ENCODE measurements at regions of chr22 and their contacts with region 1.

Region 1: DNA sequence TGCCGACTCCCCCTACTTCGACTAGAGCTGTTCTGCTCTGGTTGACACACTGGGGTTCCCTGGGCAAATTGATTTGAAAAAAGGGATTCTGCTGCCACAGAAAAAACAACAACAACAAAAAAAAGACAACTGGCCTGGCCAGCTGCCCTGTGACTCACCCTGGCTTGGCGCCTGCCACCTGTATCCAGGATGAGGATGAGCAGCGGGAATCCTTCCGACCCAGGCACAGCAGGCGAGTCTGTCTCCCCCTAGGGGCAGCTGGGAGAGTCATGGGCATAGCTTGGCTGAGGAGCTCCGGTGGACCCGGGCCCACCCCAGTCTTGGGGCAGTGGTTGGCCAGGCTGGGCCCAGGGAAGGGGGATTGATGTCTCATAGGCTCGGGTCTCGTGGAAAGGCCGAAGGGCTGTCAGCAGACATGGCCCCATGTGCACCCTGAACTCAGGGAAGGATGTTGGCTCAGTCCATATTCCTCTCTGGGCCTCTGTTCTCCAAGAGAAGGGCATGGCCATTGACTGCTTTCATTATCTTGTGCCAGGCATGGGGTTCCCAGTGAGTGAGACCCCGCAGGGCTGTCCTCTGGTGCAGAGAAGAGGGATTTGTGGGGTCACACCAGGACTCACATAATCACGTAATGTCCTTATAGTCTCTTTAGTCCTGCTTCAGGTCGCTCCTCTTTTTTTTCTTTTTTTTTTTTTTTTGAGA is 10.4 kb upstream of the SUN2 start:
- DNase-seq: no peak
- H3K4me3 ChIP-seq: no peak overlapping the region
- H3K27ac ChIP-seq: no peak overlapping the region
- H3K27me3 ChIP-seq: no peaks in the 10 kb centered on the region
- CTCF ChIP-seq: peak; percentile 92

Region 2: DNA sequence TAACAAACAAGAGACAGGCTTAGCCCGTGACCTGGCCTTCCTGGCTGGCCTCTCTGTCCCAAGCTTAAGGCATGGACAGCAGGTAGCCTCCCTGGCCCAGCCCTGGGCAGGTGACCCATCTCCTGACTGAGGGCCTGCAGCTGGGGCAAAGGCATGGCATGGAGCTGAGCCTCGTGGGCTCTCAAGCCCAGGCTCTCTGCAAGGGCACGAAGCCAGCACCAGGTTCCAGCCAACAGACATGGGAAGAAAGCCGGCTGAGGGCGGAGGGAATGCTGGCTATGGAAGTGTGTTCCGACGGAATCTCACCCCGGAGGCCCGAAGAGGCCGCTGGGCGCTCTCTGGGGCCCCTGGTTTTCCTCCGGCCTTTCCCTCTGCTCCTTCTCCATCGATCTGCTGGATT is 14.8 kb after region 1 on chr22:
- CTCF ChIA-PET with region 1: interaction called, 15 read pairs
- POLR2A ChIA-PET with region 1: no interaction called
- DNase-seq: no peak
- H3K4me3 ChIP-seq: no peak overlapping the region
- H3K27ac ChIP-seq: no peak overlapping the region
- H3K27me3 ChIP-seq: no peaks in the 10 kb centered on the region
- CTCF ChIP-seq: no peak

Region 3: DNA sequence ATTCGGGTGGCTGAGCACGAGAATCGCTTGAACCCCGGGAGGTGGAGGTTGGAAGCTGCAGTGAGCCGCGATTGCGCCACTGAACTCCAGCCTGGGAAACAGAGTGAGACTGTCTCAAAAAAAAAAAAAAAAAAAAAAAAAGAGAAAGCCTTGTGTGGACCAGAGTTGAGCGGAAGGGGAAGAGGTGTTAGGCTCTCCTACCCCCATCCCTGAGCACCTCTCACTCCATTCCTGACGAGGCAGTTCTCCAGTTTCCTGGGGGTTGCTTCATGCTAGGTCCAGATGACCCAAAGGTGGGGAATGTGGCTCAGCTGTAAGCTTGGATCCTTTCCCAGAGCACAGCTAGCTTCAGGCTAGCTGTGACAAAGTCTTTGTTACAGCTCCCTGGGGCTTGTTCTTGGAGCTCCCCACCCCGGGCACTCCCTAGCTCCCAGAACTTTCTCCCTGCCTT is 36.5 kb after region 1 on chr22:
- CTCF ChIA-PET with region 1: interaction called, 20 read pairs
- POLR2A ChIA-PET with region 1: no interaction called
- DNase-seq: peak; percentile 85
- H3K4me3 ChIP-seq: no peak overlapping the region
- H3K27ac ChIP-seq: no peak overlapping the region
- H3K27me3 ChIP-seq: peaks cover 2% of the 10 kb centered on the region
- CTCF ChIP-seq: no peak

Region 4: GRCh38 chr22:38850941-38851849 is 85.0 kb after region 1 on chr22:
- CTCF ChIA-PET with region 1: interaction called, 11 read pairs
- POLR2A ChIA-PET with region 1: no interaction called
- DNase-seq: peak; percentile 20
- H3K4me3 ChIP-seq: no peak overlapping the region
- H3K27ac ChIP-seq: peak overlapping the region; percentile 11
- H3K27me3 ChIP-seq: peaks cover 15% of the 10 kb centered on the region
- CTCF ChIP-seq: no peak

Region 5: DNA sequence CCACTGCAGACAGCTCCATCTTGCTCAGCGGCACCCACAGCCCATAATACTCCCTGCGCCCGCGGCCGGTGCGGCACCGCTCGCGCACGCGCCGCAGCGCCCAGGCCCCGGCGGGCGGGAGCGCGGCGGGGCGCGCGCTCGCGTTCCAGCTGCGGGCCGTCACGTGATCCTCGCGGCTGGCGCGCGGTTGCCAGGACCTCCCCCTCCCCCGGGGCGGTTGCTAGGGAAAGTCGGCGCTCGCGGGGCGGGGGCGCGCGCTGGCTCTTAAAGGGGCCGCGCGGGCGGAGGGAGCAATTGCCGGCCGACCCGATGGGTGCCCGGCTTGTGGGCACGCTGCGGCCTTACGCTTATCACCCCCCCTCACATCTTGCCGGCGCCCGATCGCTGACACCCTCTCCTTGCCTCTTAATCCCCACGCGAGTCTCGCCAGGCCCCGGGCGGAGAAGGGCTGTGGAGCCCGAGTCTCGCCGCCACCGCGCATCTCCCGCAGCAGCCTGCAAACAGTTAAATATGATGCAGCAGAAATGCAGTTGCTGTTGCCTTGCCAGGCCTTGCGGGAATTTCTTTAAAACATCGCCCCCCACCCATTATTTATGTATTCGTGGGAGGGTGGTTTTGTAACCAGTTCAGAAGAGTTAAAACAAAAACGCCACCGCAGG is 106.1 kb after region 1 on chr22 and contains the start of gene CBX6:
- CTCF ChIA-PET with region 1: interaction called, 50 read pairs
- POLR2A ChIA-PET with region 1: interaction called, 4 read pairs
- DNase-seq: peak; percentile 63
- H3K4me3 ChIP-seq: peak within 1 kb of the TSS; percentile 78
- H3K27ac ChIP-seq: peak within 1 kb of the TSS; percentile 88
- H3K27me3 ChIP-seq: peaks cover 3% of the 10 kb centered on the region
- CTCF ChIP-seq: no peak
- polyA plus RNA-seq, gene CBX6: 14.7 and 19.8 TPM in 2 replicates